Naive thymus-derived CD4-positive, alpha-beta T cell (primary cell): ENCODE measurements at regions of chr22 and their contacts with region 1.

Region 1: GRCh38 chr22:25081409-25081824 is 118.2 kb upstream of the CRYBB3 start:
- DNase-seq: peak in 8 of 9 donors; percentile 30 to 59 (median 50)
- ATAC-seq: peak; percentile 77
- H3K4me3 ChIP-seq: no peak overlapping the region
- H3K4me3 Mint-ChIP-seq: no peak overlapping the region
- H3K27ac ChIP-seq: no peak overlapping the region
- H3K27ac Mint-ChIP-seq: peak overlapping the region in 7 of 9 donors; percentile 17 to 83 (median 69)
- H3K4me1 ChIP-seq: peaks cover 24 to 28% of the 10 kb centered on the region in 2 donors
- H3K4me1 Mint-ChIP-seq: peaks cover 27 to 66% (median 44%) of the 10 kb centered on the region in 7 donors
- H3K27me3 ChIP-seq: no peaks in the 10 kb centered on the region
- H3K27me3 Mint-ChIP-seq: no peaks in the 10 kb centered on the region

Region 2: DNA sequence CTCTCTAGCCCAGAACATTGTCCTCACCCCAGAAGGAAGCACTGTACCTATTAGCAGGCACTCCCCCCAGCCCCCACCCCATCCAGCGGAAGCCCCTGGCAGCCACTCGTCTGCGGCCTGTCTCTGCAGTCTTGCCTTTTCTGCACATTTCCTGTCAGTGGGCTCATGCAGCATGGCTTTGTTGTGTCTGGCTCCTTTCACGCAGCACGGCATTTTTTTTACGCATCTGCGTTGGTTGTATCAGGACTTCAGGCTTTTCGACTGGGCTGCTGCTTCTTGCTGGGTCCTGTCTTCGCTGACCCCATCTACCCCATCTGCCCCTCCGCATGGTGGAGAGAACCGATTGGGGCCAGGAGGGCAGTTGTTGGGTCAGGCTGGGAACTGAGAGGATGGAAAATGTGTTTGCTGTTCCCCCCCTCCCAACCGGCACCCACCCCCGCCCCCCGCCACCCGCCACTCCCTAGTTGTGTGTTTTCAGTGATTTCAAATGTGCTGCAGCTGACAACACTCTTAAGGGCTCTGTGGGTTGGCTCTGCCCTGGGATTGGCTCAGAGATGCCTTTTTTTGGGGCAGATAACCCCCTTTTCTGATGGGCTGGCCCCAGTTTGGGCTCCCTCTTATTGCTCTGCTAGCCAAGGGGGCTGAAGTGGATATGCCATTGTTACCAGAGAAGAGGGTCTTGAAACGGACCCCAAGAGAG is 18.9 kb before region 1 on chr22:
- CTCF ChIA-PET with region 1: interaction called, 49 read pairs
- POLR2A ChIA-PET with region 1: interaction called, 61 read pairs
- intact Hi-C with region 1: loop called (anchors 1 kb)
- DNase-seq: peak; percentile 37 to 90 (median 88)
- ATAC-seq: peak; percentile 95
- H3K4me3 ChIP-seq: peak overlapping the region; percentile 44
- H3K4me3 Mint-ChIP-seq: peak overlapping the region; percentile 74 to 88 (median 83)
- H3K27ac ChIP-seq: peak overlapping the region; percentile 70
- H3K27ac Mint-ChIP-seq: peak overlapping the region; percentile 90 to 99 (median 97)
- H3K4me1 ChIP-seq: peaks cover 41 to 50% of the 10 kb centered on the region in 2 donors
- H3K4me1 Mint-ChIP-seq: peaks cover 43 to 73% (median 68%) of the 10 kb centered on the region in 7 donors
- H3K27me3 ChIP-seq: no peaks in the 10 kb centered on the region
- H3K27me3 Mint-ChIP-seq: no peaks in the 10 kb centered on the region

Region 3: GRCh38 chr22:25067851-25068421 is 13.5 kb before region 1 on chr22:
- CTCF ChIA-PET with region 1: interaction called, 49 read pairs
- POLR2A ChIA-PET with region 1: interaction called, 61 read pairs
- intact Hi-C with region 1: loop called in 1 of 2 experiments (anchors 1 kb)
- DNase-seq: peak; percentile 56 to 95 (median 92)
- ATAC-seq: peak; percentile 94
- H3K4me3 ChIP-seq: peak overlapping the region; percentile 43
- H3K4me3 Mint-ChIP-seq: peak overlapping the region; percentile 81 to 94 (median 87)
- H3K27ac ChIP-seq: peak overlapping the region; percentile 76
- H3K27ac Mint-ChIP-seq: peak overlapping the region; percentile 86 to 99 (median 98)
- H3K4me1 ChIP-seq: peaks cover 63 to 67% of the 10 kb centered on the region in 2 donors
- H3K4me1 Mint-ChIP-seq: peaks cover 51 to 96% (median 89%) of the 10 kb centered on the region in 7 donors
- H3K27me3 ChIP-seq: no peaks in the 10 kb centered on the region
- H3K27me3 Mint-ChIP-seq: no peaks in the 10 kb centered on the region

Region 4: GRCh38 chr22:25110846-25111578 is 29.6 kb after region 1 on chr22:
- CTCF ChIA-PET with region 1: interaction called, 6 read pairs
- POLR2A ChIA-PET with region 1: no interaction called
- intact Hi-C with region 1: loop called in 1 of 2 experiments (anchors 1 kb)
- DNase-seq: peak; percentile 16 to 73 (median 62)
- ATAC-seq: peak; percentile 83
- H3K4me3 ChIP-seq: peak overlapping the region; percentile 87
- H3K4me3 Mint-ChIP-seq: peak overlapping the region; percentile 84 to 96 (median 92)
- H3K27ac ChIP-seq: peak overlapping the region; percentile 16
- H3K27ac Mint-ChIP-seq: peak overlapping the region; percentile 69 to 95 (median 86)
- H3K4me1 ChIP-seq: peaks cover 5 to 16% of the 10 kb centered on the region in 2 donors
- H3K4me1 Mint-ChIP-seq: peaks cover 13 to 43% (median 19%) of the 10 kb centered on the region in 7 donors
- H3K27me3 ChIP-seq: no peaks in the 10 kb centered on the region
- H3K27me3 Mint-ChIP-seq: no peaks in the 10 kb centered on the region

Region 5: DNA sequence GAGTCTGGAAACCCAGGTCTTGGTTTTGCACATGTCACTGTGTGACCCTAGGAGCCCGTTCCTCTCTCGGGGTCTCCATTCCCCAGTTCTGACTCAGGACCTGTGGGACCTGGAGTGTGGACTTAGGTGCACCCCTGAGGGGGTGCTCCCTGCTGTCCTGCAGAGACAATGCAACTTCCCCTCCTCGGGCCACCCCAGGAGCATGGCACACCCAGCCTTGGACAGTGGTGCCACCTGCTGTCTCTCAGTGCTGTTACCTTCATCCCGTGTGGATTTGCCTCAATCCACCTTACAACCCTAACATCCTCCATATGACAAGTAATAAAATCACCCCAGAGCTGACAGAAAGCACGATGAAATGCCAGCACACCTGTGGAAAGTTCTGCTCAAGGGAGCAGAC is 90.7 kb after region 1 on chr22:
- CTCF ChIA-PET with region 1: interaction called, 27 read pairs
- POLR2A ChIA-PET with region 1: no interaction called
- intact Hi-C with region 1: loop called (anchors 1 kb)
- DNase-seq: peak in 7 of 9 donors; percentile 8 to 40 (median 23)
- ATAC-seq: peak; percentile 58
- H3K4me3 ChIP-seq: no peak overlapping the region
- H3K4me3 Mint-ChIP-seq: no peak overlapping the region
- H3K27ac ChIP-seq: no peak overlapping the region
- H3K27ac Mint-ChIP-seq: peak overlapping the region in 1 of 9 donors; percentile 51
- H3K4me1 ChIP-seq: no peaks in the 10 kb centered on the region
- H3K4me1 Mint-ChIP-seq: no peaks in the 10 kb centered on the region
- H3K27me3 ChIP-seq: no peaks in the 10 kb centered on the region
- H3K27me3 Mint-ChIP-seq: no peaks in the 10 kb centered on the region

Region 6: GRCh38 chr22:25202290-25202921 is 121.0 kb after region 1 on chr22:
- CTCF ChIA-PET with region 1: interaction called, 6 read pairs
- POLR2A ChIA-PET with region 1: no interaction called
- intact Hi-C with region 1: loop called in 1 of 2 experiments (anchors 1 kb)
- DNase-seq: peak in 8 of 9 donors; percentile 20 to 59 (median 36)
- ATAC-seq: peak; percentile 72
- H3K4me3 ChIP-seq: no peak overlapping the region
- H3K4me3 Mint-ChIP-seq: no peak overlapping the region
- H3K27ac ChIP-seq: no peak overlapping the region
- H3K27ac Mint-ChIP-seq: peak overlapping the region in 2 of 9 donors; percentile 14 to 17
- H3K4me1 ChIP-seq: no peaks in the 10 kb centered on the region
- H3K4me1 Mint-ChIP-seq: peaks cover 0 to 7% (median 0%) of the 10 kb centered on the region in 7 donors
- H3K27me3 ChIP-seq: no peaks in the 10 kb centered on the region
- H3K27me3 Mint-ChIP-seq: no peaks in the 10 kb centered on the region

Region 7: DNA sequence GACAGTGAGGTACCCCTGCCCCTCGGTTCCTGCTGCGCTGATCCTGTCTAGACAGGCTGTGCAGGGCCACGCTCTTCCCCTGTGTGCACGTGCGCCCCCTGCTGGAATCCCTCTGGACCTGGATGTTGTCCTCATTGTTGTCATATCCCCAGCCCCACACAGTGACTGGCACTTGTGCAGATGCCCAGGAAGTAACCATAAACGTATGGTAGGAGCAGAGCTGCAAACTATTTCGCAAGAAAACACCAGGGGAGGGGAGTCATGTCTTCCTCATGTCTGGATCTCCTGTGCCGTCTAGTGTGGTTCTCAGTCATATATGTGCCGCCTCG is 252.7 kb after region 1 on chr22:
- CTCF ChIA-PET with region 1: no interaction called
- POLR2A ChIA-PET with region 1: no interaction called
- intact Hi-C with region 1: loop called in 1 of 2 experiments (anchors 2 kb)
- DNase-seq: peak in 3 of 9 donors; percentile 10 to 60 (median 12)
- ATAC-seq: peak; percentile 53
- H3K4me3 ChIP-seq: no peak overlapping the region
- H3K4me3 Mint-ChIP-seq: no peak overlapping the region
- H3K27ac ChIP-seq: no peak overlapping the region
- H3K27ac Mint-ChIP-seq: no peak overlapping the region
- H3K4me1 ChIP-seq: no peaks in the 10 kb centered on the region
- H3K4me1 Mint-ChIP-seq: peaks cover 0 to 2% (median 0%) of the 10 kb centered on the region in 7 donors
- H3K27me3 ChIP-seq: no peaks in the 10 kb centered on the region
- H3K27me3 Mint-ChIP-seq: peaks cover 0 to 14% (median 0%) of the 10 kb centered on the region in 5 donors